ENCODE measurements at regions of chr7 and their contacts with region 1.

Region 1: GRCh38 chr7:2709553-2710285 is 21.7 kb downstream of the AMZ1 start:
- DNase-seq: peak; percentile 90
- CTCF ChIP-seq: peak; percentile 98

Region 2: DNA sequence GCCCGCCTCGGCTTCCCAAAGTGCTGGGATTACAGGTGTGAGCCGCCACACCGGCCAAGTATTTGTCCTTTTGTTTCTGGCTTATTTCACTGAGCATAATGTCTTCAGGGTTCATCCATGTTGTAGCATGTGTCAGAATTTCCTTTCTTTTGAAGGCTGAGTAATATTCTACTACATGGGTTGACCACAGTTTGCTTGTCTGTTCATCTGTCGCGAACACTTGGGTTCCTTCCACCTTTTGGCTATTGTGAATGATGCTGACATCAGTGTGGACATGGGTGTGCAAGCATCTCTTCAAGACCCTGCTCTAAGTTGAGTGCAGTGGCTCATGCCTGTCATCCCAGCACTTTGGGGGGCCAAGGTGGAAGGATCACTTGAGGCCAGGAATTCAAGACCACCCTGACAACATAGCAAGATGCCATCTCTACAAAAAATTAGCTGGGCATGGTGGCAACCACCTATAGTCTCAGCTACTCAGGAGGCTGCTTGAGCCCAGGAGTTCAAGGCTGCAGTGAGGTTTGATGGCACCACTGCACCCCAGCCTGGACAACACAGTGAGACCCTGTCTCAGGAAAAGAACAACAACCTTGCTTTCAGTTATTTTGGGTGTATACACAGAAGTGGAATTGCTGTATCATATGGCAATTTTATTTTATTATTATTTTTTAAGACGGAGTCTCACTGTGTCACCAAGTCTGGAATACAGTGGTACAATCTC is 289.3 kb before region 1 on chr7:
- CTCF ChIA-PET with region 1: no interaction called
- POLR2A ChIA-PET with region 1: no interaction called
- DNase-seq: no peak
- CTCF ChIP-seq: no peak

Region 3: GRCh38 chr7:2451171-2452073 is 258.3 kb before region 1 on chr7:
- CTCF ChIA-PET with region 1: interaction called, 10 read pairs
- POLR2A ChIA-PET with region 1: no interaction called
- DNase-seq: peak; percentile 90
- CTCF ChIP-seq: peak; percentile 78

Region 4: DNA sequence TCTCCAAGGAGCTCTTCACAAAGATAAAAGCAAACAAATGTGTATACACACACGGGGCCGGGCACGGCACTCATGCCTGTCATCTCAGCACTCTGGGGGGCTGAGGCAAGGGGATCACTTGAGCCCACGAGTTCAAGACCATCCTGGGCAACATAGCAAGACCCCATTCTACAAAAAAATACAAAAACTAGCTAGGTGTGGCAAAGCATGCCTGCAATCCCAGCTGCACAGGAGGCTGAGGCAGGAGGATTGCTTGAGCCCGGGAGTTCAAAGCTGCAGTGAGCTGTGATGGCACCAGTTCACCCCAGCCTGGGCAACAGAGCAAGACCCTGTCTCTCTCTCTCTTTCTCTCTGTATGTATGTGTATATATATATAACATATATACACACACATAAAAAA is 55.7 kb before region 1 on chr7:
- CTCF ChIA-PET with region 1: interaction called, 10 read pairs
- POLR2A ChIA-PET with region 1: no interaction called
- DNase-seq: no peak
- CTCF ChIP-seq: no peak

Region 5: DNA sequence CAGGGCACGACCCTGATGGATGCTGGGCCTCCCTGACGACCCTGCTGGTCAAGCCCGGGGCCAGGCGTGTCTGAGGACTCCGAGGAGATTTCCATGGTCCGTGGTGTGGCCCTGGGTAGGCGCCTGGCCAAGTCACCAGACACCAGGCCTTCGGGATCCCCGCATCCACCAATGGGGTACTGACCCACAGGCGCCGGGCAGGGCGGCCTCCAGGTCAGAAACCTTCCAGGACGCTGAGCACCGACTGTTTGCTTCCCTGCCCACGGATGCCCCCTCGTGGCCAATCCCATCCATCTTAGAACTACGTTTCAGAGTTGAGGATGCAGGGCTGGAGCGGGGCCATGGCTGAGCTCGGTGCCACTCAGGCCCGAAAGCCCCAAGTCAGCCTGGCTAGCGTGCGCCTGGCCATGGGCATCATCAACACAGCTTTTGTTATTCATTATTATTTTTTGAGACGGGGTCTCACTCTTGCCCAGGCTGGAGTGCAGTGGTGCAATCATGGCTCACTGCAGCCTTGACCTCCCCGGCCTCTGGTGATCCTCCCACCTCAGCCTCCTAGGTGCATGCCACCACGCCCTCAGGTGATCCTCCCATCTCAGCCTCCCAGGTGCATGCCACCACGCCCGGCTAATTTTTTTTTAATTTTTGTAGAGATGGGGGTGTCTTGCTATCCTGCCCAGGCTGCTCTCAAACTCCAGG is 28.8 kb before region 1 on chr7:
- CTCF ChIA-PET with region 1: interaction called, 26 read pairs
- POLR2A ChIA-PET with region 1: no interaction called
- DNase-seq: peak; percentile 78
- CTCF ChIP-seq: peak; percentile 59

Region 6: DNA sequence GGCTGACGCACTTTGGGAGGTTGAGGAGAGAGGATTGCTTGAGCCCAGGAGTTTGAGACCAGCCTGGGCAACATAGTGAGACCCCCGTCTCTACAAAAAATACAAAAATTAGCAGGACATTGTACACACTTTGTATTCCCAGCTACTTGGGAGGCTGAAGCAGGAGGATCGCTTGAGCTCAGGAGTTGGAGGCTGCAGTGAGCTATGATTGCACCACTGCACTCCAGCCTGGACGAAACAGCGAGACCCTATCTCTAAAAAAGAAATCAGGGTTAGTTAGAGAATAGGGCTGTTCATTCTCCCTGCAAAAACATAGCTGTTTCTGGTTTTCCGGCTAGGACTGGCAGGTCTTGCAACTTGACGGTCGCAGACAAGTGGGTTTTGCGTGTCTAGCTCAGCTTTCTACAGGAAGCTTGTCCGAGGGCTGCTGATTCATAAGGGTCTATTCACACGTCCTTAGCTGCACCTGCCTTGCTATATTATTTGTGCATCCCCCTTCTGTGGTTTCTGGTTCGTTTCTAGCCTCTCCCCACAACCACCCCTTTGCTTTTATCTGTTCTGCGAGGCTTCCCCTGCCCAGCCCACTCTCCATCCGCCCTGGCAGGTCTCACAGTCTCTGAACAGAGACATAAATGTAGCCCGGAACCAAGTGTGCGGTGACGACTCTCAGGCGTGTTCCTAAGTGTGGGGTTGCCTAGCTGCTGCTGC is 11.0 kb before region 1 on chr7:
- CTCF ChIA-PET with region 1: interaction called, 65 read pairs
- POLR2A ChIA-PET with region 1: interaction called, 4 read pairs
- DNase-seq: peak; percentile 92
- CTCF ChIP-seq: no peak

Region 7: GRCh38 chr7:2728316-2729030 is 18.8 kb after region 1 on chr7:
- CTCF ChIA-PET with region 1: interaction called, 55 read pairs
- POLR2A ChIA-PET with region 1: no interaction called
- DNase-seq: no peak
- CTCF ChIP-seq: no peak

Region 8: DNA sequence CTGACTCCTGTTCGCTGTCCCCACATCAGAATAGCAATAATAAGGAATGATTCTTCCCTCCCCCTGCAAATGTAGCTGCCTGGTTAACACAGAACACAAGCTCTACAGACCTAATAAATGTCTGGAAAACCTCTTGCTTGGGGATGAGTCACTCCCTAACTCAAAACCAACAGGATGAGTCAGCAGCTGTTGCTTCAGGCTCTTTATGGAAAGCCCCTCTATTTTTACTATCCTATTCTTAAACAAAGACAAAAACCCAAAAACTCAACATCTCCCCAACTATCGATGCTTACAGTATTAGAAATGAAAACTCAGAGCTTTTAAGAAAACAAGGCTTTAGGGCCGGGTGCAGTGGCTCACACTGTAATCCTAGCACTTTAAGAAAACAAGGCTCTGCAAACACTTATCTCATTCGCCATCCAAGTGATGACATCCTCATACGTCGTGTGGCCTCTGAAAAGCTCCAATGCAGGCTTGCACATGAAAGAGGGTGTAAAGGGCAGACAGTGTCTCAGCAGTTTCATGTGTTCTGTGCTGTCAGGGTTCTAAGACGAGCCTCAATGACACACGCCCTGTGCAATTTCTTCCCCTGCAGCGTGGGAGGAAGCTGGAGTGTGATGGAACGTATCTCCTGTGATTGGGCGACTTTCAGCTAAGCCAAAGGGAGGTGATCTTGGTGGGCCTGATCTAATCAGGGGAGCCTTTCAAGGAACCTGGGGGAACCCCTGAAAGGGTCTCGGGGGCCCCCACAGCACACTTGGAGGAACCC is 48.4 kb after region 1 on chr7:
- CTCF ChIA-PET with region 1: interaction called, 14 read pairs
- POLR2A ChIA-PET with region 1: no interaction called
- DNase-seq: peak; percentile 69
- CTCF ChIP-seq: no peak